Dendritic cell treated with granulocyte-macrophage colony-stimulating factor and Interleukin-4, amounts not matched to agents 40 ng/mL and 50 ng/mL, for 4 days (primary cell): ENCODE measurements at regions of chr3 and their contacts with region 1.

Region 1: GRCh38 chr3:53375019-53375418 is 27.7 kb upstream of the DCP1A start:
- H3K4me3 Mint-ChIP-seq: no peak overlapping the region
- H3K27ac Mint-ChIP-seq: no peak overlapping the region
- H3K4me1 Mint-ChIP-seq: no peaks in the 10 kb centered on the region
- H3K27me3 Mint-ChIP-seq: peaks cover 13% of the 10 kb centered on the region

Region 2: DNA sequence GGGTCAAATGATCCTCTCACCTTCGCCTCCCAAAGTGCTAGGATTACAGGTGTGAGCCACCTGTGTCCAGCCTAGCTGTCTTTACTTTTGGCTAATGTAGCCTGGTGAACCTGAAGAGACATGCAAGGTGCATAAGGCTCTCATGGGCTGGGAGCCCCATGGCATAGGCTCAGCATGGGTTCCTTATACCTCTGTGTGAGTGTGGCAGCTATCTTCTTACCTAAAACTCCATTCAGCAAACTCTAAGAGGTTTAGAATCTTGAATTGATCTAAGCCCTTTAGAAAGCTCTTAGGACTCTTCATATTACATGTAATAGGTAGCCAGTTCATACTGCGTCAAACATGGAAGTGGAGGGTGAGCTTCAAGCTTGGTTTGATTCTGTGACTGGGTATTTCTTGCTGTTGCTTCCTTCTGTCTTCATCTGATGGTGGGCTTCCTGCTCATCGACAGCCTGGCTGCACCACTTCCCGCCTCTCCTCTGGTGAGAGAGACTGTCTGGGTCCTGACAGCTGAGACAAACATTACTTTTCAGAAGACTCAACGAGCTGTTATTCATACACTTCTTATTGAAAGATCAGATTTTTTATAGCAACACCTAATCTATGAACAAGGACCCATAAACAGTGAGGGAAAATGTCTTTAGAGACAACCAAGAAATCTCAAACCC is 99.9 kb before region 1 on chr3:
- intact Hi-C with region 1: no loop called
- H3K4me3 Mint-ChIP-seq: no peak overlapping the region
- H3K27ac Mint-ChIP-seq: no peak overlapping the region
- H3K4me1 Mint-ChIP-seq: peaks cover 19% of the 10 kb centered on the region
- H3K27me3 Mint-ChIP-seq: no peaks in the 10 kb centered on the region

Region 3: DNA sequence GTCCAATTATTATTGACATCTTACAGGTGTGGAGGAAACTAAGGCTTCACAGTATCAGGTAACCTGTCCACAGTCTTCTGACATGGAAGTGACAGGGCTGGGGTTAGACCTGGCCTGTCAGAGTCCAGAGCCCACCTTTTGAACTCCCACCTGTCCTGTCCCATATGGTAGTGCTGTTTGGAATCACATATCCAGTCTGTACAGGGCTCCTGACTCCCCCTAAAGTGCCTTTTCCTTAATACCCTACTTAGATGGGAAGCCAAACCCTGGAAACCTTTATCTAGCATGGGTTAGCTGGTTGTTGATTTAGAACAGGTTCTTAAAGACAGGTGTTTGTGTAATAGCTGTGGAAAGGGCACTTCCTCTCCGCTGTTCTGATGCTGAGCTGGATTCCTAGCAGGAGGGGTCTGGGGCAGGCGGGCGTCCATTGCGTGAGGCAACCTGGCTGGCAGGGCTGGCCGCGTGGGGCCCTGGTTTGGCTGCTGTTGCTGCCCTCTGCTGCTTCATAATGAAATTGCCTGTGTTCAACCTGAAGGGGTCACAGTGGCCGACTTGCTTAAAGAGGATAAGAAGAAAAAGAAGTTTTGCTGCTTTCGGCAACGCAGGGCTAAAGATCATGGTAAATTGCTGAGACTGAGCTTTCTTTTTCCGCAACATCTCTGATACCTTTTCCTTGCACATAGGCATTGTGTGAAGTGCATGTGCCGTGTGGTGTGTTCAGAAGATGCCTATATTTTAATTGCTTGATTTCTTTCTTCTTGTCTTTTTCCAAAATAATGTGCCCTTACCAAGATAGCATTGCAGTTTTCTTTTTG is 335.0 kb after region 1 on chr3:
- intact Hi-C with region 1: loop called (anchors 5 kb)
- H3K4me3 Mint-ChIP-seq: no peak overlapping the region
- H3K27ac Mint-ChIP-seq: peak overlapping the region; percentile 41
- H3K4me1 Mint-ChIP-seq: peaks cover 48% of the 10 kb centered on the region
- H3K27me3 Mint-ChIP-seq: peaks cover 5% of the 10 kb centered on the region

Region 4: DNA sequence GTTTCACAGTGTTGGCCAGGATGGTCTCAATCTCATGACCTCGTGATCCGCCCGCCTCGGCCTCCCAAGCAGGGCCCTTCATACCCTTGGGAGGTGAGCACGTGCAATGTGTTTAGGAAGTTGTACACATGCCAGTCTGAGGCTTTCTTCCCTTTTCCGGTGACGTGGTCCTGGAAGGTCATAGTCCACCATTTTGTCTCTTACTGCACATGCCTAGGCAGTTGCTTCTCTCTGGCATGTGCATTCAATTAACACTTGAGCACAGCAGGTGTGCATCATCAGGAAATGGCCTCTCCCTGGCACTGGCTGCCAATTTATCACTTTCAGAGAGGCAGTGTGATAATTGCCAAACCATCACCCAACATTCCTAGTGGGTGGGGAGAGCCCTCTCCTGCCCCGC is 538.4 kb after region 1 on chr3:
- intact Hi-C with region 1: loop called (anchors 10 kb)
- H3K4me3 Mint-ChIP-seq: no peak overlapping the region
- H3K27ac Mint-ChIP-seq: no peak overlapping the region
- H3K4me1 Mint-ChIP-seq: no peaks in the 10 kb centered on the region
- H3K27me3 Mint-ChIP-seq: peaks cover 44% of the 10 kb centered on the region